ENCODE measurements at regions of chr20 and their contacts with region 1.

Region 1: GRCh38 chr20:33443512-33444239 is at the start of gene SNTA1:
- DNase-seq: peak; percentile 60 to 92 (median 78)
- ATAC-seq: peak; percentile 63 to 71
- H3K4me3 Mint-ChIP-seq: peak within 1 kb of the TSS; percentile 87 to 96 (median 92)
- H3K27ac Mint-ChIP-seq: peak within 1 kb of the TSS; percentile 76 to 96 (median 92)
- H3K4me1 Mint-ChIP-seq: peaks cover 14 to 31% (median 26%) of the 10 kb centered on the region in 4 donors
- H3K27me3 Mint-ChIP-seq: no peaks in the 10 kb centered on the region
- polyA plus RNA-seq, gene SNTA1: 6.1 to 9.1 (median 6.4) TPM

Region 2: GRCh38 chr20:33401184-33401920 is 42.3 kb before region 1 on chr20 and contains the start of gene CDK5RAP1:
- POLR2A ChIA-PET with region 1: interaction called, 21 read pairs
- DNase-seq: peak; percentile 67 to 91 (median 82)
- ATAC-seq: peak; percentile 96 to 97
- H3K4me3 Mint-ChIP-seq: peak within 1 kb of the TSS; percentile 93 to 99 (median 97)
- H3K27ac Mint-ChIP-seq: peak within 1 kb of the TSS; percentile 80 to 97 (median 91)
- H3K4me1 Mint-ChIP-seq: peaks cover 20 to 62% (median 60%) of the 10 kb centered on the region in 4 donors
- H3K27me3 Mint-ChIP-seq: no peaks in the 10 kb centered on the region
- polyA plus RNA-seq, gene CDK5RAP1: 28.7 to 36.6 (median 33.9) TPM